ENCODE measurements at regions of chr12 and their contacts with region 1.

Region 1: DNA sequence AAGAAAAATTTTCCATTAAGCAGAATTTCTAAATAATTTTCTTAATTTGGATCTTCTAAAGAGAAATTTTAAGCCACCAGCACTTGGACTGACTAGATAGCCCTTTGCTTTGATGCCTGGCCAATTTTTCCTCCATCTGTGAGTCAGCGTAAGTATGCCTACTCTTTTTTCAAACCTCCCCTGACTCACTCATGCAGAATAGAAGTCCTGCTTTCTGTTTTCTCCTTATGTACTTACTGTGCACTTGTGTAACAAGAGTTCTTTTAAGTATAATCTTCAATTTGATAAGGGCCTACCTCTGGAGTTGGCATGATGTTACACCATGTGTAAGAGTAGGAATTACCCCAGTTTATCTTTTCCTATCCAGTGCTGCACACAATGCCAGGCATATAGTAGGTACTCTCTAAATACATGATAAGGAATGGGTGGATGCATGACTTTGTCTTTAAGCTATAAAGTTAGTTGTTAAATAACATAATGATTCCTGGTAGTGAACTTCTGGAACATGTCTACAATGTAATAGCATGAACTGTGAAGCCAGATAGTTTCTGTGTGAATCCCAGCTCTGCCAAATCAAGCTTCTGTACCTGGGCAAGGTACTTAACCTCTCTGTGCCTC is 329.6 kb downstream of the TMTC2 start:
- ATAC-seq: peak in 5 of 8 experiments; percentile 56 to 98 (median 76)
- H3K4me3 ChIP-seq: no peak overlapping the region
- H3K27ac ChIP-seq: no peak overlapping the region
- H3K4me1 ChIP-seq: peaks cover 4 to 12% of the 10 kb centered on the region in 2 donors

Region 2: DNA sequence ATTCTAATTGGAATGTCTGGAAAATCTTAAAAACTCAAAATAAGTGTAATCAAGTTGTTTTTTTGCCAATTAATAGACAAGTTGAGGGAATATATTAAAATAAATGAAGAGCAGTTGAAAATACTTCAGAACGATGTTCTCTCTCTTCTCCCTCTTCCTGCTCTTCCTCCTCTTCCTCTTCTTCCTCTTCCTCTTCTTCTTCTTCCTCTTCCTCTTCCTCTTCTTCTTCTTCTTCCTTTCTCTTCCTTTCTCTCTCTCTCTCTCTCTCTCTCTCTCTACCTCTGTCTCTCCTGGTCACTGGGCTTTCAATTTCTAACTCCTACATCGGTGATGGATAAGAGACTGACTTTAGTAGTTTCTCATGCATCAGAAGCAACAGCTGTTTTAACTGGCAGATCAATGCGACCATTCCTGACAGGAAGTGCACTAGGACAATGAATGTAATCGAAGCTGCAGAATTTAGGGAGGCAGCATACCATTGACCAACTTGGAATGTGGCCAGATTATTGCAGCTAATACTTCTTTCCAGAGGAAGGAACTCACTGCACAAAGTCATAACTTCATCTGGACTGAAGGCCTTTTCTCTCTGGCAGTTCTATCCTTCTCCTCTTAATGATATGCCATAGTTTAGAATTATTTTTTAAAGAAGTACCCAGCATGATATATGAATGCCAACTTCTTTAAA is 343.4 kb before region 1 on chr12:
- in situ Hi-C with region 1: no loop called
- ATAC-seq: no peak
- H3K4me3 ChIP-seq: no peak overlapping the region
- H3K27ac ChIP-seq: no peak overlapping the region
- H3K4me1 ChIP-seq: no peaks in the 10 kb centered on the region

Region 3: GRCh38 chr12:83389237-83389996 is 373.1 kb after region 1 on chr12:
- in situ Hi-C with region 1: loop called in 1 of 9 experiments (anchors 25 kb)
- ATAC-seq: peak in 3 of 8 experiments; percentile 15 to 71 (median 49)
- H3K4me3 ChIP-seq: no peak overlapping the region
- H3K27ac ChIP-seq: no peak overlapping the region
- H3K4me1 ChIP-seq: no peaks in the 10 kb centered on the region

Measured in motor neuron (in vitro differentiated cells).